Mucosa of descending colon (tissue), 3 donors: ENCODE measurements at regions of chr12 and their contacts with region 1.

Region 1: DNA sequence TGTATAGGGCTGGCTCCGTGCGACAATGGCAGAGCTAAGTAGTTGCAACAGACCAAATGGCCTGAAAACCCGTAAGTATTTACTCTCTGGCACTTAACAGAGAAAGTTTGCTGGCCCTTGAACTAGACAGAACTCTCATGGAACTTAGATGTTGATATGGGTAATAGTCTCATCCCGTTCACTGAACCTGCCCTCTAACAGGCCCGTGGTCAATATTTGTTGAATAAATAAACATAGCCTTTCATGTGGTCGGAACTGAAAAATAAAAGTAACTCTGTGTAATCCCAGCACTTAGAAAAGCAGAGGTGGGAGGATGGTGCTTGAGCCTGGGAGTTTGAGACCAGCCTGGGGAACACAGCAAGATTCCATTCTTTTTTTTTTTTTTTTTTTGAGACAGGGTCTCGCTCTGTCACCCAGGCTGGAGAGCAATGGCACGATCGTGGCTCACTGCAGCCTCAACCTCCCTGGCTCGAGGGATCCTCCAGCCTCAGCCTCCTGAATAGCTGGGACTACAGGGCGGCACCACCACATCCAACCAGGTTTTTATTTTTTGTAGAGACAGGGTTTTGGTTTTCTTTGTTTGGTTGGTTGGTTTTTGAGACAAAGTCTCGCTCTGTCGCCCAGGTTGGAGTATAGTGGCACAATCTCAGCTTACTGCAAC is 29.7 kb downstream of the KDM2B start:
- DNase-seq: no peak
- ATAC-seq: no peak
- H3K4me3 ChIP-seq: no peak overlapping the region
- H3K4me1 ChIP-seq: no peaks in the 10 kb centered on the region
- CTCF ChIP-seq: no peak

Region 2: GRCh38 chr12:121678716-121679580 is 127.8 kb after region 1 on chr12:
- intact Hi-C with region 1: loop called (anchors 5 kb)
- DNase-seq: no peak
- ATAC-seq: no peak
- H3K4me3 ChIP-seq: no peak overlapping the region
- H3K4me1 ChIP-seq: no peaks in the 10 kb centered on the region
- CTCF ChIP-seq: no peak